ENCODE measurements at regions of chr13 and their contacts with region 1.

Region 1: DNA sequence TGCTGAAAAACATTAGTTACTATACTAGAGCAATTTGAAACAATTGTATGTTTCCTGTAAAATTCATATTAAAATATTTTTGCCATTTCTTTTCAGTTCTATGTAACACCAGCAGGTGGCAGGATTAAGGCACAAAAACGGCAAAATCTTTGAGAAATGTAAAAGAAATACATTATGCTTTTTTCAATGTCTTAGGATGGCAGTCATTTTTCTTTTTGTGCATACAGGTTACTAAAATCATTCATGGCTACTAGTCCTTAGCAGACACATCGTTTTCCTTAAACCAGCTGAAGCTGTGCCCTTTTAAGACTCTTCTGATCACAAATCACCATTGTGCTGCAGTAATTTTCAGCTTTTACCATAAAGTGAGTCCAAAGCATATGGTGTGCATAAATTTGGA is 800.7 kb upstream of the SLITRK5 start:
- DNase-seq: peak; percentile 45
- H3K4me3 Mint-ChIP-seq: no peak overlapping the region
- H3K27ac Mint-ChIP-seq: no peak overlapping the region
- H3K4me1 Mint-ChIP-seq: no peaks in the 10 kb centered on the region
- H3K27me3 Mint-ChIP-seq: no peaks in the 10 kb centered on the region
- CTCF ChIP-seq: peak; percentile 58

Region 2: GRCh38 chr13:85970727-85971126 is 899.7 kb before region 1 on chr13:
- CTCF ChIA-PET with region 1: no interaction called
- POLR2A ChIA-PET with region 1: no interaction called
- intact Hi-C with region 1: loop called (anchors 5 kb)
- DNase-seq: peak; percentile 25
- H3K4me3 Mint-ChIP-seq: no peak overlapping the region
- H3K27ac Mint-ChIP-seq: no peak overlapping the region
- H3K4me1 Mint-ChIP-seq: peaks cover 10% of the 10 kb centered on the region
- H3K27me3 Mint-ChIP-seq: no peaks in the 10 kb centered on the region
- CTCF ChIP-seq: peak; percentile 34

Region 3: DNA sequence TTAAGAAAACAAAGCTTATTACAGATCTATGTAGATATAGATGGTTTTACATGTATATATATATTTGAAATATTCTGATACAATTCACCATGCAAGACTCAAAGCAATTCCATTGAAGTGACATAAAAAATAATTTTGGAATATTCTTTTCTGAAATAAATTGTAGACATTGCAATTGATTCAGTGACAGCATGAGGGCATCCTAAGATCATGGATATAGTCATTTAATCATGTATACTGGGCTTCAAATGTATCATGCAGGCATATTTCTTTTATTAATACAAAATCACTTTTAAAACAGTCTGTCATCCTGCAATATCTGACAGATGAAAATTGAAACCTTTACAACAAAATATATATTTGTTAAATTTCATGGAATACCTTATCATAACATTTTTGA is 784.6 kb before region 1 on chr13:
- CTCF ChIA-PET with region 1: no interaction called
- POLR2A ChIA-PET with region 1: no interaction called
- intact Hi-C with region 1: loop called (anchors 10 kb)
- DNase-seq: peak; percentile 14
- H3K4me3 Mint-ChIP-seq: no peak overlapping the region
- H3K27ac Mint-ChIP-seq: no peak overlapping the region
- H3K4me1 Mint-ChIP-seq: peaks cover 6% of the 10 kb centered on the region
- H3K27me3 Mint-ChIP-seq: no peaks in the 10 kb centered on the region
- CTCF ChIP-seq: peak; percentile 22